Aorta (tissue), 5 donors: ENCODE measurements at regions of chr3 and their contacts with region 1.

Region 1: GRCh38 chr3:17088602-17089313 is 204.0 kb downstream of the PLCL2 start:
- DNase-seq: peak in 1 of 2 donors; percentile 41
- ATAC-seq: peak; percentile 67
- H3K4me3 ChIP-seq: no peak overlapping the region
- H3K27ac ChIP-seq: peak overlapping the region; percentile 81 to 83
- H3K4me1 ChIP-seq: peaks cover 0 to 4% of the 10 kb centered on the region in 2 donors
- H3K27me3 ChIP-seq: no peaks in the 10 kb centered on the region

Region 2: DNA sequence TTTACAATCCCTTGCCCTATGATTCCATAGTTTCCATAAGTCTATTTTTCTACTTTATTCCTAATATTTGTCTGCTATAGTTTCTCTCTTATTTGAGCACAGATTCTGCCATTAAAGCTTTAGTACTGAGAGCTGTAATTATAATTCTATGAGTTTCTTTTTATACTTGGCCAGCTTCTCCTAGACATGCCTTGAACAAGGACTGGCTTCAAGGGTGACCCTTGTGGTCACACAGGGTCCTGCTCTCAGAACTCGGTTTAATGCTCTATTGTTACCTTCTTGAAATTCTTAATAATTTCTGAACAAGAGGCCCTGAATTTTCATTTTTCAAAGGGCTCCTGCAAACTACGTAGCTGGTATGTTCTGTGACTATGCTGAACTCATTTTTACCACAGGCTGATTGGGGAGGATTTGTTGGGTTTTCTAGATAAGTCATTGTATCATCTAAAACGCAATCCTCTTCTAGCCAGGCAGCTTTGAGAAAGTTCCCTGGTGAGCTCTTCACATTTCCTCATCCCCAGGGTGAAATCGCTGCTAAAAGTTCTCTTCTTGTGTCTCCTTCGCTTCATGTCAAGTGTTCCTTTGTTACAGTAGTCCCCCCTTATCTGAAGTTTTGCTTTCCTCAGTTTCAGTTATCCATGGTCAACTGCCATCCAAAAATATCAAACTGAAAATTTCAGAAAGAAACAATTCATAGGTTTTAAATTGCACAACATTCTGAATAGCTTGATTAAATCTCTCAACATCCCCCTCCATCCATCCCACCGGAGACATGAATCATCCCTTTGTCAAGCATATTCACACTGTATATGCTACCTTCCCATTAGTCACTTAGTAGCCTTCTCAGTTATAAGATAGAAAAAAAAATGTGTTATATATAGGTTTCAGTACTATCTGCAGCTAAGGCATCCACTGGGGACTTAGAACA is 216.6 kb before region 1 on chr3:
- intact Hi-C with region 1: no loop called
- DNase-seq: no peak
- ATAC-seq: no peak
- H3K4me3 ChIP-seq: no peak overlapping the region
- H3K27ac ChIP-seq: no peak overlapping the region
- H3K4me1 ChIP-seq: no peaks in the 10 kb centered on the region
- H3K27me3 ChIP-seq: no peaks in the 10 kb centered on the region

Region 3: DNA sequence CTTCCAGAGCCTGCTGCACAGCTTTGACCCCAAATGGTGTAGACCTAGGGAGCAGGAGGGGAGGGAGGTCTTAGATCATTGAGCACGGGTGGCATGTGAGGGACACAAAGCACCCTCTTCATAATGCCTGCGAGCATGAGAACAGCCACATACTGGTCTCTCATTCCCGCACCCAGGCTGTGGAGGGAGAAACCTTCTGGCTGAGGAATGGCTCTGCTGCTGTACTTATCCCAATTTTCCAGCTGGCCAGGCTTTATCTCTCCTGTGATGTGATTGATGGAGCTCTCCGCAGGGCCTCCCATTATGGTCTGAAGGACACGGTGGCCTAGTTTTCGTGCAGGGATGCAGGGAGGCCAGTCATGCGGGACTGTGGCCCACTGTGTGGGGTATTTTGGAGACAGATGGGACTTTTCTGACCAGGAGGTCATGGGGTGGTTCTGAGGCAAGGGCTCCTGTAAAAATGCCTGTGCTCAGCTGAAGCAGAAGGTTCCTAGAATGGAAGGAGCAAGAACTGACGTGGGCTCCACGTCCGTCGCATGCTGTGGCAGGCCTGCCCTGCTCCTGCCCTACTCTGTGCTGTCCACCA is 47.5 kb after region 1 on chr3:
- intact Hi-C with region 1: loop called in 1 of 2 experiments (anchors 5 kb)
- DNase-seq: peak in 1 of 2 donors; percentile 69
- ATAC-seq: peak; percentile 69
- H3K4me3 ChIP-seq: no peak overlapping the region
- H3K27ac ChIP-seq: peak overlapping the region; percentile 12 to 29
- H3K4me1 ChIP-seq: peaks cover 0 to 2% of the 10 kb centered on the region in 2 donors
- H3K27me3 ChIP-seq: no peaks in the 10 kb centered on the region